ENCODE measurements at regions of chr17 and their contacts with region 1.

Region 1: DNA sequence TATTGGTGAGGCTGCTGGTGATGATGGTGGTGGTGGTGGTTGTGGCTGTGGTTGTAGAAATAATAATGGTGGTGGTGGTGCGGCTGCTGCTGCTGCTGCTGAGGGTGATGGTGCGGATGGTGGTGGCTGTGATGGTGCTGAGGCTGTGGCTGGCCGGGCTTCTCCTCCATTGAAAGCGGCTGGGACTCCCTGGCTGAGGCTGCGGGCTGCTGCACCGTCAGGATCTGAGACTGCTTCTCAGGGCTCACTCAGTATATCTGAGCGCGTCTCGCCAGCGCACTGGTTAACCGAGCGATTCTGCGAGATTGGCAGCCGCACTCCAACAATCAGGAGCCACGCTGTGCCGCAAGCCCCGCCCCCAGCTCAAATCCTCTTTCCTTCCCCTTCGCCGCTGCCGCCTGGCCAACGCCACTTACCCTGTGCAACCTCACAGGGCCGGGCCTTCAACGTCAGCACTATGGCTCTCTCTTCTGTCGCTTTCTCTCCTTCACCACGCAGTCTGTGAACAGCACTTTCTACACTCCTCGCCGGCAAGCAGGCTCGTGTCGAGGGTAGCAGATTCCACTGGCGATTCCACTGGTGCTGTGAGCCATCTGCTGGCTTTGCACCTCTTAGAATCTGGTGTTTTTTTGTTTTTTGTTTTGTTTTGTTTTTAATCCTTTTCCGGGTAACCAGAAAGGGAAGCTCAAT is at the start of gene NUFIP2:
- DNase-seq: peak; percentile 89
- ATAC-seq: peak; percentile 96
- H3K4me3 ChIP-seq: peak within 1 kb of the TSS; percentile 85 to 96
- H3K27ac ChIP-seq: peak within 1 kb of the TSS; percentile 97
- H3K4me1 ChIP-seq: peaks cover 24% of the 10 kb centered on the region; the same call in 1 of the 2 replicates
- H3K27me3 ChIP-seq: no peaks in the 10 kb centered on the region
- CTCF ChIP-seq: no peak
- total RNA-seq, gene NUFIP2: 106 TPM

Region 2: DNA sequence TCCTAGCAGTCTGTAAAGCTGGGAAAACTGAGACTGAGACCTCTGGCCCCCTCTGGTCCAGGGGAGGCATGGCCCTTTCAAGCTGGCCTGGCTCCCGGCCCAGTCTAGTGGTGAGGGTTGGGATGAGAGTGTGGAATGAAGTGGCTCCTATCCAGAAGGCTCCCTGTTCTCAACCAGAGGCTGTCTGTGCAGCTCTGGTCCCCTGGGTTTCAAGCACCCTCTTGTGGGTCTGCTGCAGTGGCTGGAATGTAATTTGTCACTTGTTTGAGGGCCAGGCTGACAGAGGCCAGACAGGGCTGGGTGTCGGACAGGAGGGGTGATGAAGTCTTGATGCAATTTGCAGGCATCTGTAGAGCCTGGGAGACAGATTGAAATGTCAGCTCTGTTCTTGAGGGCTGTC is 320.6 kb before region 1 on chr17:
- CTCF ChIA-PET with region 1: no interaction called
- POLR2A ChIA-PET with region 1: interaction called, 17 read pairs
- in situ Hi-C with region 1: no loop called
- intact Hi-C with region 1: no loop called
- DNase-seq: no peak
- ATAC-seq: no peak
- H3K4me3 ChIP-seq: no peak overlapping the region
- H3K27ac ChIP-seq: no peak overlapping the region
- H3K4me1 ChIP-seq: no peaks in the 10 kb centered on the region
- H3K27me3 ChIP-seq: no peaks in the 10 kb centered on the region
- CTCF ChIP-seq: no peak

Region 3: DNA sequence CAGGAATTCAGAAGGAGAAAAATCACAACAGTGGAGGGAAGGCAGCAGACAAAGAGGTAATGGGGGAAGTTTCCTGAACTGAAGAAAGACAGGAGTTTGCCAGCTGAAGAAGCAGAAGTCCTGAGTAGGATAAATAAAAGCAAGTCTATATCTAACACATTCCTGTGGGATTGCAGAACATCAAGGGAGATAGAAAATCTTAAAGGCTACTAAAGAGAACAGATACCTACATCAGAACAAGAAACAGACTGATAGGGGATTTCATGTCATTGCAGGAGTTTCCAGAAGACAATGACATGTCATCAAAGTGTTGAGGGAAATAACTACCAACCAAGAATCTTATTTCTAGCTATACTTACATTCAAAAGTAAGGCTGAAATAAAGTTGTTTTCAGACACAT is 68.6 kb before region 1 on chr17:
- CTCF ChIA-PET with region 1: interaction called, 10 read pairs
- POLR2A ChIA-PET with region 1: no interaction called
- in situ Hi-C with region 1: no loop called
- intact Hi-C with region 1: no loop called
- DNase-seq: no peak
- ATAC-seq: no peak
- H3K4me3 ChIP-seq: no peak overlapping the region
- H3K27ac ChIP-seq: no peak overlapping the region
- H3K4me1 ChIP-seq: no peaks in the 10 kb centered on the region
- H3K27me3 ChIP-seq: no peaks in the 10 kb centered on the region
- CTCF ChIP-seq: no peak

Region 4: DNA sequence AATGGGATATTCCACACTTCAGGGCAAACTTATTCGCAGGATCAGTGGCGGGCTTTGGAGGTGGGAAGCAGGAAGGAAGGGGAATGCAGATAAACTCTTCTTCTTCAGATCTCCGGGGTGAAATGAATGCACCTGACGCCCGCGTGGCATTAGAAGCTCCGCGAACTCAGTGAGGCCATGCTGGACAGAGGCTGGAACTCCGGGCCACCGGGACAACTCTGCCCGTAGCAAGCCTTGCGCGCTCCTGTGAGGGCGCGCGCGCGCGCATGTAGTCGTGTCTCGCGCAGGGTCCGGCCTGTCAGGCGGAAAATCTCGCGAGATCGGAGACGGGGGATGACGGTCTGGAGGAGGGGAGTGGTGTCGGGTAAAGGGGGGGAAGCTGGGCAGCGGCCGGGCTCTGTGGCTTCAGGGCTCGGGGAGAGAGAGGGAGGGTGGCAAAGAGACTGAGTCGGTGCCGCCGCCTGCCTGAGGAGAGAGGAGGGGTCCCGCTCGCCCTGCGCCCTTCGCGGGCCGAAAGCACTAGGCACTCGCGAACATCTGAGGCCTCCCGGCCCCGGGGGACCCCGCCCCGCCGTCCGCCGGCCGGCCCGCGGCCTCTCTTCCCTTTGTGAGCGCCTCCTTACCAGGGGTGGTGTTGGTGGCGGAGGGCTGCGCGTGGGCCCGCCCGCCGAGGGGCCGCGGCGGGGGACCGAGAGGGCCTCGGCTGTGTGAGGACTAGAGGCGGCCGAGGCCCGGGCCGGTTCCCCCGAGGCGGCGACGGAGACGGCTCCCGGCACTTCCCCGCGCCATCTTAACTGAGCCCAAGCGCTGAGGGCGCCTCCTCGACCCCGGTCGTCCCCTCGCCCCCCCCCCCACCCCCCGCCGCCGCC is 96.2 kb after region 1 on chr17 and contains the start of gene TAOK1:
- CTCF ChIA-PET with region 1: no interaction called
- POLR2A ChIA-PET with region 1: no interaction called
- in situ Hi-C with region 1: no loop called
- intact Hi-C with region 1: loop called (anchors 5 kb)
- DNase-seq: peak; percentile 86
- ATAC-seq: peak; percentile 96
- H3K4me3 ChIP-seq: peak within 1 kb of the TSS; percentile 68 to 69
- H3K27ac ChIP-seq: peak within 1 kb of the TSS; percentile 94
- H3K4me1 ChIP-seq: peaks cover 19% of the 10 kb centered on the region; the same call in 1 of the 2 replicates
- H3K27me3 ChIP-seq: no peaks in the 10 kb centered on the region
- CTCF ChIP-seq: no peak
- total RNA-seq, gene TAOK1: 111 TPM

Region 5: DNA sequence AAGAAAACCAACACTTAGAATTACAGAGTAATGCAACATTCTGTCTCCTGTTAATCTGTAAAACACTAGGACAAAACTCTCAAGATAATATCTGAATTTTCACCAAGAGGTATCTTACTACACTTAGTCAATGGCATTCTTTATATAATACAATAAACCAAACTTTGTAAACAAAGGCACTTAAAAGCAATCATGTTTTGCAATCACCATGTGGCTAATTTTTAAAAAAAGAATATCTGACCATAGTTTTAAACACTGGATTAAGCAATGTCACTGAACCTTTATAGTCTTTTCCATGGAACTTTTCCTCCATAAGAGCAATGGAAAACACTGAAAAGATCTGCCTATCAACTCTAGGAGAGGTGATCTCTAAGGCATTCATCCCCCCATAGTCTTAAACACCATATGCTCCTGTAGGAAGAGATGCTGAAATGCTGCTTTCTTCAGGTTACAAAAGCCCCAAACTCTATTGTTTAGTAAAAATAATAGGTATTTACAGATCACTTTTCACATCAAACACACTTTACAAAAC is 472.8 kb after region 1 on chr17:
- CTCF ChIA-PET with region 1: no interaction called
- POLR2A ChIA-PET with region 1: no interaction called
- in situ Hi-C with region 1: no loop called
- intact Hi-C with region 1: no loop called
- DNase-seq: no peak
- ATAC-seq: no peak
- H3K4me3 ChIP-seq: no peak overlapping the region
- H3K27ac ChIP-seq: no peak overlapping the region
- H3K4me1 ChIP-seq: no peaks in the 10 kb centered on the region
- H3K27me3 ChIP-seq: no peaks in the 10 kb centered on the region
- CTCF ChIP-seq: no peak

Region 6: GRCh38 chr17:30148376-30148775 is 854.3 kb after region 1 on chr17:
- CTCF ChIA-PET with region 1: interaction called, 13 read pairs
- POLR2A ChIA-PET with region 1: no interaction called
- in situ Hi-C with region 1: no loop called
- intact Hi-C with region 1: no loop called
- DNase-seq: no peak
- ATAC-seq: no peak
- H3K4me3 ChIP-seq: no peak overlapping the region
- H3K27ac ChIP-seq: no peak overlapping the region
- H3K4me1 ChIP-seq: peaks cover 5% of the 10 kb centered on the region; the same call in 1 of the 2 replicates
- H3K27me3 ChIP-seq: no peaks in the 10 kb centered on the region
- CTCF ChIP-seq: no peak

Measured in Panc1 (cell line).